HepG2 (cell line): ENCODE measurements at regions of chr2 and their contacts with region 1.

Region 1: GRCh38 chr2:64859312-64860212 is 129.6 kb upstream of the SLC1A4 start:
- DNase-seq: no peak
- ATAC-seq: peak; percentile 76
- H3K4me3 ChIP-seq: peak overlapping the region; percentile 46 to 76 (median 57)
- H3K27ac ChIP-seq: no peak overlapping the region
- H3K4me1 ChIP-seq: peaks cover 52% of the 10 kb centered on the region
- H3K27me3 ChIP-seq: peaks cover 5 to 55% of the 10 kb centered on the region in 2 experiments
- CTCF ChIP-seq: no peak; the same call in 1 of the 2 replicates
- EP300 ChIP-seq: peak in 1 of 2 experiments; percentile 27; a peak in 1 of 4 replicates
- POLR2A ChIP-seq: no peak
- RAD21 ChIP-seq: no peak

Region 2: GRCh38 chr2:64601034-64601754 is 258.4 kb before region 1 on chr2:
- CTCF ChIA-PET with region 1: interaction called, 21 read pairs
- POLR2A ChIA-PET with region 1: no interaction called
- in situ Hi-C with region 1: loop called (anchors 5 kb)
- intact Hi-C with region 1: no loop called
- DNase-seq: no peak
- ATAC-seq: no peak
- H3K4me3 ChIP-seq: no peak overlapping the region
- H3K27ac ChIP-seq: no peak overlapping the region
- H3K4me1 ChIP-seq: peaks cover 31% of the 10 kb centered on the region
- H3K27me3 ChIP-seq: peaks cover 0 to 2% of the 10 kb centered on the region in 2 experiments; a peak in 1 of 5 replicates
- CTCF ChIP-seq: no peak
- EP300 ChIP-seq: no peak
- POLR2A ChIP-seq: no peak
- RAD21 ChIP-seq: no peak

Region 3: GRCh38 chr2:64698668-64699444 is 160.7 kb before region 1 on chr2:
- CTCF ChIA-PET with region 1: no interaction called
- POLR2A ChIA-PET with region 1: no interaction called
- in situ Hi-C with region 1: no loop called
- intact Hi-C with region 1: no loop called
- DNase-seq: peak; percentile 72
- ATAC-seq: peak; percentile 86
- H3K4me3 ChIP-seq: no peak overlapping the region
- H3K27ac ChIP-seq: peak overlapping the region; percentile 3
- H3K4me1 ChIP-seq: peaks cover 20% of the 10 kb centered on the region
- H3K27me3 ChIP-seq: no peaks in the 10 kb centered on the region
- CTCF ChIP-seq: no peak
- EP300 ChIP-seq: peak in 1 of 2 experiments; percentile 10; a peak in 1 of 4 replicates
- POLR2A ChIP-seq: no peak
- RAD21 ChIP-seq: no peak

Region 4: GRCh38 chr2:64837959-64838591 is 21.5 kb before region 1 on chr2:
- CTCF ChIA-PET with region 1: no interaction called
- POLR2A ChIA-PET with region 1: no interaction called
- in situ Hi-C with region 1: no loop called
- intact Hi-C with region 1: loop called (anchors 2 kb)
- DNase-seq: no peak
- ATAC-seq: peak; percentile 26
- H3K4me3 ChIP-seq: no peak overlapping the region
- H3K27ac ChIP-seq: no peak overlapping the region
- H3K4me1 ChIP-seq: peaks cover 62% of the 10 kb centered on the region
- H3K27me3 ChIP-seq: peaks cover 1 to 4% of the 10 kb centered on the region in 2 experiments; a peak in 3 of 5 replicates
- CTCF ChIP-seq: no peak
- EP300 ChIP-seq: no peak
- POLR2A ChIP-seq: no peak
- RAD21 ChIP-seq: no peak